Activated T-helper 1 cell treated with anti-CD3 and anti-CD28 coated beads, Interleukin-12 subunit alpha, Interleukin-12 subunit beta, Interleukin-2, Interleukin-4 antibody, amounts not matched to agents 30 ng/mL and 10 ng/mL and 1 ng/mL, durations not matched to agents 14 hours and 24 hours and 36 hours (primary cell): ENCODE measurements at regions of chr13 and their contacts with region 1.

Region 1: DNA sequence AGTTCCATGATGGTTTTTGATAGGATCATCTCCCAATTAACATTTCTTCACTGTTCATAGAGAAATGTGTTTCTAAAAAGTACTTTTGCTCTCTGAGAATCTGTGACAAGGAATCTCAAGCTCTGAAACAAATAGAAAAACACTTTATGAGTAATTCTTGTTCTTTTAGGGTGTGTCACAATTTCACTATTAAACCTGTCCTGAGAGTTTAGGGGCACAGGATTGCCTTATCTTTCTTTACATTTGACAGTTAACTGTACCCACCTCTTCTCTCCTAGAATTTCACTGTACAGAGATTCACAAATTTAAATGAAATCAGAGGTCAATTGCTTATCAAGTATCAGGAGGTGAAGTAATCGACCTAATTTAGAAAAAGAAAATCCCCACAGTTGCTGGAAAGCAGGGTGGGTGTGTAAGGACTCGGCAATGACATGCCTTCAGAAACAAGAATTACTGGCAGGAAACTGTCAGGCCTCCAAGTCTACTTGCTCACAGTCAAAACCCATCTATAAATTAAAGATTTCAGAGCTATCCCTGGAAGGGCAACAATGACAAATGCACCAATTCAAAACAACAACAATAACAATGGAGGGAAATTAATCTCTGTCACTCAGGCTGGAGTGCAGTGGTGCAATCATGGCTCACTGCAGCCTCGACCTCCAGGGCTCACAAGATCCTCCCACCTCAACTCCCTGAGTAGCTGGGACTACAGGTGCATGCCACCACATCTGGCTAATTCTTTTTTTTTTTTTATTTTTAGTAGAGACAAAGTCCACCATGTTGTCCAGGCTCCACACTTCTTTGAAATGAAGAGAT is 250.2 kb downstream of the ABCC4 start:
- DNase-seq: no peak
- H3K4me3 Mint-ChIP-seq: no peak overlapping the region
- H3K27ac Mint-ChIP-seq: peak overlapping the region; percentile 26
- H3K4me1 Mint-ChIP-seq: peaks cover 24% of the 10 kb centered on the region
- H3K27me3 Mint-ChIP-seq: no peaks in the 10 kb centered on the region

Region 2: GRCh38 chr13:94515374-94515773 is 535.6 kb before region 1 on chr13:
- intact Hi-C with region 1: no loop called
- DNase-seq: no peak
- H3K4me3 Mint-ChIP-seq: no peak overlapping the region
- H3K27ac Mint-ChIP-seq: no peak overlapping the region
- H3K4me1 Mint-ChIP-seq: no peaks in the 10 kb centered on the region
- H3K27me3 Mint-ChIP-seq: no peaks in the 10 kb centered on the region

Region 3: GRCh38 chr13:94640721-94641120 is 410.3 kb before region 1 on chr13:
- intact Hi-C with region 1: no loop called
- DNase-seq: no peak
- H3K4me3 Mint-ChIP-seq: no peak overlapping the region
- H3K27ac Mint-ChIP-seq: no peak overlapping the region
- H3K4me1 Mint-ChIP-seq: no peaks in the 10 kb centered on the region
- H3K27me3 Mint-ChIP-seq: peaks cover 5% of the 10 kb centered on the region

Region 4: DNA sequence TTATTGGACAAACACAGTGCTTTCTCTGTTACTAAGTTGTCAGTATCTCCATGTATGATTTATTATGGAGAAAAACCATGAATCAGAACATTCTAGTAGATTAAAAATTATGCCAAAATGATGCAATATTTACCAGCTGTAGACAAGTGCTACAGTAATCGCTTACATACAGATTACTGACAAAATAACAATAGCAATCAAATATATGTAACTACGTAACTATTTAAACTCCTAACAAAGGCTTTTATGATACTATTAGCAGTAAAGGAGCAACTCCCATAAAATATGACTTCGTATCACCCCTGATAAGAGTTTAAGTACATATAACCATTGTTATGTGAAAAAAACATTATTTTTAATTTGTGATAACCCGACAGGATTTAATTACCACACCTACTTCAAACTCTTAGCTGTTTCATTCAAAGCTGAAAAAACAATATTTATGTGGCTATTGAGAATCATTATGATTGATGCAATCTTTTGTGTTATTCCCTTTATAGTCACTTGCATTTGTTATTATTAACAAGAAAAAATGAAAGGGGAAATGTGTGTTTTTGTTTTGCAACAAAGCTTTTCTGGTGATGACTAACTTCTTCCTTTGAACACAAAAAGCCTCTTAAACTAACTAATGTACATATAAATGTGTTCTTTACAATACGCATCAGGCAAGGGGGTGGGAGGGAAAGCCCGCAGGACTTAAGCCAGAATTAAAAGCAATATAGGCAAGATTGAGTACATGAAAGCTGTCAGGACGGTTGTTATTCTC is 102.8 kb after region 1 on chr13:
- intact Hi-C with region 1: loop called (anchors 2 kb)
- DNase-seq: no peak
- H3K4me3 Mint-ChIP-seq: no peak overlapping the region
- H3K27ac Mint-ChIP-seq: peak overlapping the region; percentile 40
- H3K4me1 Mint-ChIP-seq: peaks cover 8% of the 10 kb centered on the region
- H3K27me3 Mint-ChIP-seq: no peaks in the 10 kb centered on the region

Region 5: DNA sequence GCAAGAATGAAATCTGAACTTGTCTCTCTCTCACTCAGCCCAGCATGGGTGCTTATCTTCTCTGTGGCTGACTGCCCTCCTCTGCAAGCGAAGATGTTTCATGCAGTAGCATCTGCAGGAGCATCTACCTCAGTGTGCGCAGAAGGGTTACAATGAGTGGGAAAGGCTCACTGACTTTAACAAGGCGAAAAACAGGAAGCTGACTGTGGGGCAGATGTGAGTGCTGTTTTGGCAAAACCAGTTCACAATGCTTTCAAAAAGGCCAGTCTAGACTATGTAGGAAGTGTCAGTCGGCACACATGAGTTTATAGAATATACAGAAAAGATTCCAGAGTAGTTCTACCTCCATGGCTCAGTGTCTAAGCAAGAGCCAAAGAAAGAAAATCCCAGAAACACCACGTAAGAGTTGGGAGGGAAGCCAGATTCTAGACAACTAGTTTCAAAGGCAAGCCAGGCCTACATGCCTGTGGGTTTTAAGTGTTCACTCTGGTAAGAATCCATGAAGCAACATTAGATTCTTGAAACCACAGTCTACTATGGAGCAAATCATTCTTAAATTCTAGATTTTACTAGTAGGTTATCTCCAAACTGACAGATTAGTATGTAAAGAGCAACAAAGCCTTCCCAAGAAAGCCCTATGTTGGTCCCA is 125.7 kb after region 1 on chr13:
- intact Hi-C with region 1: loop called (anchors 2 kb)
- DNase-seq: peak; percentile 5
- H3K4me3 Mint-ChIP-seq: no peak overlapping the region
- H3K27ac Mint-ChIP-seq: peak overlapping the region; percentile 61
- H3K4me1 Mint-ChIP-seq: peaks cover 33% of the 10 kb centered on the region
- H3K27me3 Mint-ChIP-seq: no peaks in the 10 kb centered on the region

Region 6: DNA sequence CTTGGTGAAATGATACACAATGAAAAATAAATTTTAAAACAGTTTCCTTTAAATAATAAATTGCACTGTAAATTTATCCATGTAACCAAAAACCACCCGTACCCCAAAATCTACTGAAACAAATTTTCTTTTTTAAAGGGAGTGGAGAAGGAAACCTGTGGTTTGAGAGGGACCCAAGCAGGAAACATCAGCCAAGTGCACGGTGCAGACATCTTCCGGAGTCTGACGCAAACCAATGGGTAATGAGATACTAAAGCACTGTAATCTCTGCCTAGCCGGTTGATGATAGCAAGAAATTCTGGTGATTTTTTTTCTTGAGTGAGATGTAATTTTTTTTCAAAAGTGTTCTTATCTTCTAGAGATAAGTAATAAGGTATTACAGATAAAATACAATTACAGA is 134.8 kb after region 1 on chr13:
- intact Hi-C with region 1: loop called (anchors 1 kb)
- DNase-seq: peak; percentile 48
- H3K4me3 Mint-ChIP-seq: peak overlapping the region; percentile 34
- H3K27ac Mint-ChIP-seq: peak overlapping the region; percentile 37
- H3K4me1 Mint-ChIP-seq: peaks cover 53% of the 10 kb centered on the region
- H3K27me3 Mint-ChIP-seq: no peaks in the 10 kb centered on the region

Region 7: GRCh38 chr13:95256086-95256485 is 205.1 kb after region 1 on chr13:
- intact Hi-C with region 1: no loop called
- DNase-seq: no peak
- H3K4me3 Mint-ChIP-seq: no peak overlapping the region
- H3K27ac Mint-ChIP-seq: no peak overlapping the region
- H3K4me1 Mint-ChIP-seq: peaks cover 5% of the 10 kb centered on the region
- H3K27me3 Mint-ChIP-seq: no peaks in the 10 kb centered on the region